T-cell (primary cell): ENCODE measurements at regions of chr10 and their contacts with region 1.

Region 1: DNA sequence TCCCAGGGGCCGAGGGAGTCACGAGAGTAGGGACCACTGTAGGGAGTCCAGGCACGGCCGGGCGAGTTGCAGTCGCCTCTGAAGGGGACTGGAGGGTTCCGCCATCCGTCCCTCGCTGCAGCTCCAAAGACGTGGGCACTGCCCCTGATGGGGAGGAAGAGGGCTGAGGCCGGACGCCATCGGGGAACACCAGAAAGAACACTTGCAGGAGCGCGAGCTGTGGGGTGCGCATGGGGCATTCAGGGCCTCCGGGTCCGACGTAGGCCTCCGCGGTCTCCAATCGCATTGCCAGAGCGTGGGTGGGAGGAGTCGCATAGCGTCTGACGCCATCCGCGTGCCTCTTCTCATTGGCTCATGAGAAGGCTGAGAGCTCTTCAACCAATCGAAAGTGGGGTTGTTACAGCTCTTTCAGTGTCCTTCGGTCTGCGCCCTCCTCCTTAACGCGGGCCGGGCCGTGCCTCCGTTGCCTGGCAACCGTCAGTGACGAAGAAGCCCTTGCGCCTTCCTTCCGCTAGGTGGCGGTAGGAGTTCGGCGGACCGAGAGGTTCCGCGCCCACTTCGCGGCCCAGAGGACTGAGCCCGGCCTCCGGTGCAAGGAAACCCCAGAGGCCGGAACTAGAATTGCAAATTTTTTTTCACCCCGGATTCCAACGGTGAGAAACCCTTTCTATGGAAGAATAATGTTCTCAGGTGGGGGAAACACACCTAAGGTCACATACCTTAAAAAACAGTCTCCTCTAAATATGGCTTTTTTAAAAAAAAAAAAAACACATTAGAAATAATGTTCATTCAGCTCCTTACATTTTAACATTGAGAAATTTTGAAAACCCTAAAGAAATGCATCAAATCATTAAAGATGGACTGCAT is at the start of gene TCTN3:
- DNase-seq: peak; percentile 88 to 99 (median 95)
- ATAC-seq: peak; percentile 98 to 99 (median 98)
- H3K4me3 ChIP-seq: peak within 1 kb of the TSS; percentile 71 to 91
- H3K4me3 Mint-ChIP-seq: peak within 1 kb of the TSS; percentile 95 to 98 (median 96)
- H3K27ac ChIP-seq: peak within 1 kb of the TSS; percentile 80
- H3K27ac Mint-ChIP-seq: peak within 1 kb of the TSS; percentile 88 to 93
- H3K4me1 ChIP-seq: peaks cover 5 to 23% of the 10 kb centered on the region in 2 experiments
- H3K4me1 Mint-ChIP-seq: peaks cover 45 to 55% (median 48%) of the 10 kb centered on the region in 3 donors
- H3K27me3 ChIP-seq: peaks cover 0 to 5% of the 10 kb centered on the region in 2 experiments
- H3K27me3 Mint-ChIP-seq: peaks cover 0 to 2% of the 10 kb centered on the region in 2 donors
- total RNA-seq, gene TCTN3: 16.2 to 20.2 (median 18.8) TPM

Region 2: GRCh38 chr10:95675403-95676112 is 18.3 kb before region 1 on chr10:
- CTCF ChIA-PET with region 1: interaction called, 3 to 15 read pairs
- POLR2A ChIA-PET with region 1: no interaction called
- DNase-seq: no peak
- ATAC-seq: no peak
- H3K4me3 ChIP-seq: no peak overlapping the region
- H3K4me3 Mint-ChIP-seq: no peak overlapping the region
- H3K27ac ChIP-seq: no peak overlapping the region
- H3K27ac Mint-ChIP-seq: no peak overlapping the region
- H3K4me1 ChIP-seq: no peaks in the 10 kb centered on the region
- H3K4me1 Mint-ChIP-seq: no peaks in the 10 kb centered on the region
- H3K27me3 ChIP-seq: no peaks in the 10 kb centered on the region
- H3K27me3 Mint-ChIP-seq: no peaks in the 10 kb centered on the region

Region 3: DNA sequence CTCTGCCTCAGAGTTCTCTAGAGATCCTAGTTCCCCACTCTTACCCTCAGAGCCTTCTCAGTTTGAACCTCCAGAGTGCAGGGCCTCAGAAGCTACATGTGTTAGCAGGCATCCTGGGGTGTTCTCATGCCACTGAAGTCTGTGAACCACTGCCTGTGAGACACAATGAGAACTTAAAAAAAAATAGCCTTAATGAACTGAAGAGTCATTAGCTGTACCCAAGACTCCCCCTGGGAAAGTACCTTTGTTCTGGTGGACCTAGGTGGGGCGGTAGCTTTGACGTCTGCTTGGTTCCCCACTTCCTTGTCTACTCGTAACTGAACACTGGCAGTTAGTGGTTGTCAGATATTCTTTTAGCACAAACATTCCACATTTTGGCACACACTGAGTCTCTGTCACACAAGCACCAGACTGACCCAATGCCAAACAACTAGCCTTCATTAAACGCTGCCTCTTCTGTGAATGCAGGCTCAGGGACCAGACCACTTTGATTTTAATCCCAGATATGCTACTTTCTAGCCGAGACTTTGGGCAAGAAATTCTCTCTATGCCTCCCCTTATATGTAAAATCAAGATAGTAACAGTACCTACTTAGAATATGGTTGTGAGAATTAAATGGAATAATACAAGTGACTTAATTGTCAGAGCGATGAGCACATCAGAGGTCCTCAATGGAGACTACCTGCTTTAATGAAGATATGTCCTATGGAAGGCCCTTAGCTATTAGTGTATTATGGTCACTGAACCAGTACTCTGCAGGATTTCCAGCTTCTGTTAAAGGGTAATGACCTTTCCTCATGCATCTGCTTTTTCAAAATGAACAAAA is 138.5 kb after region 1 on chr10:
- CTCF ChIA-PET with region 1: interaction called, 3 to 173 read pairs
- POLR2A ChIA-PET with region 1: interaction called in 1 of 2 experiments, 6 read pairs
- DNase-seq: peak in 34 of 35 experiments; percentile 5 to 85 (median 43)
- ATAC-seq: peak; percentile 27 to 95 (median 72)
- H3K4me3 ChIP-seq: no peak overlapping the region
- H3K4me3 Mint-ChIP-seq: peak overlapping the region in 1 of 3 donors; percentile 19
- H3K27ac ChIP-seq: peak overlapping the region; percentile 51
- H3K27ac Mint-ChIP-seq: peak overlapping the region; percentile 76 to 87
- H3K4me1 ChIP-seq: peaks cover 0 to 28% of the 10 kb centered on the region in 2 experiments
- H3K4me1 Mint-ChIP-seq: peaks cover 14 to 32% (median 15%) of the 10 kb centered on the region in 3 donors
- H3K27me3 ChIP-seq: no peaks in the 10 kb centered on the region
- H3K27me3 Mint-ChIP-seq: no peaks in the 10 kb centered on the region

Region 4: DNA sequence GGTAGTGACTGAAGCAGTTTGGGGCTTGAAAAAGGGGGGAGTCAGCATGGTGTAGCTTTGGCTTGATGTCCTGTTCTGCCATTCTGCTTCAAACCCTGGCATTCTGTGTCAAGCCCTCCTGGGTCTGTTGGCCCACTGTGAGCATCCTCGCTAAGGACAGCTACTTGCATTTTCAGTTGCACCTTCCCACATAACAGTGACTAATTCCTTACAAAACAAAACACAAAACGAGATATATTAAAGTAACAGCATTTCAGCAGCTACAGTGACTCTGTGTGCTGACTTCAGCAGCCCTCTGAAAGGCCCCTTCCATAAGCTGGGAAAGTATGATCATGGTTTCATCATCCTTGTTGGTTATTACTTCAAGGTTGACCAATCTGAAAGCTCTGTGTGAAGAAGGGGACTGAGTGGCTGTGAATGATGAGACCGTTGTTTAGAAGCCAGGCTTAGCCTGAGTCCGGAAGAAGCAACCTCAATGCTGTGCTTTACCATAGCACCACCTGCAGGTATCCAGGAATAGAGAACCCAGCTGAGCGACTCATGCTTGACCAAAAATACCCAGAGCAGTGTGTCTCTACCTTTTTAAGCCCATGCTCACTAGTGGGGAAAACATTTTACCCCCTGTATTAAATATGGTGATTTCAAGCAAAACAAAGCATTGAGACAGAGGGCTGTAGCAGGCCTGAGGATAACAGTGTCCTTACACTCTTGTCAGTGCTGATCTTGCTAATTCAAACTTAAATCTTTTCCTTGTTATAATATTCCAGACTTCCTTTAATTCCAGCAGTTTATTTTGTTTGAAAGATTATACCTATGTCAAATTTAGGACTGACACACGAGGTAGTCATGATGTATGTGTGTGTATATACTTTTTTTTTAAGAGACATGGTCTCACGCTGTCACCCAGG is 171.3 kb after region 1 on chr10:
- CTCF ChIA-PET with region 1: interaction called, 13 to 58 read pairs
- POLR2A ChIA-PET with region 1: no interaction called
- DNase-seq: peak in 29 of 35 experiments; percentile 4 to 69 (median 13)
- ATAC-seq: peak; percentile 70 to 94 (median 84)
- H3K4me3 ChIP-seq: no peak overlapping the region
- H3K4me3 Mint-ChIP-seq: no peak overlapping the region
- H3K27ac ChIP-seq: no peak overlapping the region
- H3K27ac Mint-ChIP-seq: no peak overlapping the region
- H3K4me1 ChIP-seq: peaks cover 0 to 5% of the 10 kb centered on the region in 2 experiments
- H3K4me1 Mint-ChIP-seq: peaks cover 7 to 12% (median 10%) of the 10 kb centered on the region in 3 donors
- H3K27me3 ChIP-seq: no peaks in the 10 kb centered on the region
- H3K27me3 Mint-ChIP-seq: no peaks in the 10 kb centered on the region

Region 5: DNA sequence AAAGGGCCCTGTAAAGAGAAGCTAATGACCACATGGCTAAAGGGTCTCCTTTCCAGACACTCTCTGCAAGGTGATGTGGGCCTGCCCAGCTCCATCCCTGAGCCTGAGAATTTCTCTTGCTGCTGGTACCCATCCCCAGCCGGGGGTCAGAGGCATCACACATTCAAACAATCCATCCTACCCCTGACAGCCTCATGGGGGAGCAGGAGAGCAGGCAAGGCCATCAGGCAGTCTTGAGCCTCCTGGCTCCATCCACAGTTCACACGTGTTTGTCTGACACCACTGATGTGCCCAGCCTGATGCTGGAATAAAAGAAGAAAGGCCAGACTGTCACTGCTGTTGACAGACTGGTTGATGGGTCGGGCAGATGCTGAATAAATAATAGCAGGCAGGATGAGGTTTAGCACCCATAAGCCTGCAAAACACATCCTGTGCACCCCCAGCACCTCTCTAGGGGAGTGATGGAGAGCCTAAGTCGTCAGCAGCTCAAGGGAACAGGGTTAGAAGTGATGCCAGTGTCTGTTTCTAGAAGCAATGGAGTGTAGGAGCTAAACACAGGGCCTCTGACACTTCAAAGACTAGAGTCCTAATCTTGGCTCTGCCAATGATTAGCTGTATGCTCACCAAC is 776.3 kb after region 1 on chr10:
- CTCF ChIA-PET with region 1: no interaction called
- POLR2A ChIA-PET with region 1: no interaction called
- DNase-seq: peak in 9 of 35 experiments; percentile 4 to 31 (median 8)
- ATAC-seq: peak in 2 of 4 experiments; percentile 32 to 36
- H3K4me3 ChIP-seq: no peak overlapping the region
- H3K4me3 Mint-ChIP-seq: no peak overlapping the region
- H3K27ac ChIP-seq: no peak overlapping the region
- H3K27ac Mint-ChIP-seq: no peak overlapping the region
- H3K4me1 ChIP-seq: no peaks in the 10 kb centered on the region
- H3K4me1 Mint-ChIP-seq: no peaks in the 10 kb centered on the region
- H3K27me3 ChIP-seq: peaks cover 0 to 23% of the 10 kb centered on the region in 2 experiments
- H3K27me3 Mint-ChIP-seq: peaks cover 21 to 31% of the 10 kb centered on the region in 2 donors